Endothelial cell of umbilical vein (primary cell): ENCODE measurements at regions of chr14 and their contacts with region 1.

Region 1: GRCh38 chr14:50778721-50779483 is 52.1 kb downstream of the NIN start:
- DNase-seq: no peak
- H3K4me3 ChIP-seq: no peak overlapping the region
- H3K27ac ChIP-seq: no peak overlapping the region
- H3K4me1 ChIP-seq: peaks cover 32% of the 10 kb centered on the region
- H3K27me3 ChIP-seq: no peaks in the 10 kb centered on the region
- CTCF ChIP-seq: no peak
- POLR2A ChIP-seq: no peak

Region 2: DNA sequence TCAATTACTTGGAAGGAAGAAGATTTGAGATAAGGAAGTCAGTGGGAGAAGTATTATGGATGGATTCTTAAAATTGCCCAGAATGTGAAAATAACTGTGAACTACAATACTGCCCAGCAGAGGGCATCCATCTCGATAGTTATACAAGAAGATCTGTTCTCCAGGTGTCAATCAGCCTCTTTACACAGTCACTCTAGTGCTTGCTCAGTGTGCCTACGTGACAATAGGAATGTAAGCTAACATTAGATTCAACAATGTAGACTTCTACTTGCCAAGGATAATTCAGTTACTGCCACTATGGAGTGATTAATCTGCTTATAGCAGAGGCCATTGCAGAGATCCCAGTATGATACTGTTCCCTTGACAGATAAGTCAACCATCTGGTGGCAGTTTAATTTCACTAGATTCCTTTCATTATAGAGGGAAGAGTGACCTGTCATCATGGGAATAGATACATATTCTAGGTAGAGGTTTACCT is 235.9 kb before region 1 on chr14:
- CTCF ChIA-PET with region 1: interaction called, 14 read pairs
- POLR2A ChIA-PET with region 1: no interaction called
- dilution Hi-C with region 1: no loop called
- intact Hi-C with region 1: loop called (anchors 1 kb)
- DNase-seq: peak; percentile 68
- H3K4me3 ChIP-seq: no peak overlapping the region
- H3K27ac ChIP-seq: no peak overlapping the region
- H3K4me1 ChIP-seq: no peaks in the 10 kb centered on the region
- H3K27me3 ChIP-seq: peaks cover 0 to 11% of the 10 kb centered on the region in 2 experiments
- CTCF ChIP-seq: peak; percentile 24 to 47
- POLR2A ChIP-seq: no peak

Region 3: GRCh38 chr14:50599700-50600444 is 179.0 kb before region 1 on chr14:
- CTCF ChIA-PET with region 1: interaction called, 42 read pairs
- POLR2A ChIA-PET with region 1: no interaction called
- dilution Hi-C with region 1: no loop called
- intact Hi-C with region 1: loop called (anchors 1 kb)
- DNase-seq: peak; percentile 68
- H3K4me3 ChIP-seq: no peak overlapping the region
- H3K27ac ChIP-seq: no peak overlapping the region
- H3K4me1 ChIP-seq: peaks cover 3% of the 10 kb centered on the region
- H3K27me3 ChIP-seq: no peaks in the 10 kb centered on the region
- CTCF ChIP-seq: peak; percentile 35 to 46
- POLR2A ChIP-seq: no peak

Region 4: DNA sequence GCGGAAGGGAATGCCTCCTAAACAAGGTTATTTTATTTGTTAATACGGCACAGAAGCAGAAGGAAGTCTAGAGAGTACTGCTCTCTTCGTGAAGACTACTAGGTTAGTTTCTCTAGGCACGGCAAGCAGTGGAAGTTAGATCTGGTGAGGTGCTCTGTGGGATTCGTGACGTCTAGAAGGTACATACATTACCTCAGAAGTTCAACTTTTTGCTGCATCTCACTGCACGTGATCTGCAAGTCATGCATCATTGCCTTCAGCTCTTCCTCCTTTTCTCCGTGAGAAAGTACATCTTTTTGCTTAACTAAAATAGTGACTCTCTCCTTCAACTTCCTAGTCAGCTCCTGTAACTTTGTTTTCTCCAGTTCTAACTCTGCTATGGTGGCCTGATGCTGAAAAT is 22.6 kb before region 1 on chr14:
- CTCF ChIA-PET with region 1: interaction called, 91 read pairs
- POLR2A ChIA-PET with region 1: no interaction called
- dilution Hi-C with region 1: no loop called
- intact Hi-C with region 1: no loop called
- DNase-seq: no peak
- H3K4me3 ChIP-seq: no peak overlapping the region
- H3K27ac ChIP-seq: no peak overlapping the region
- H3K4me1 ChIP-seq: no peaks in the 10 kb centered on the region
- H3K27me3 ChIP-seq: no peaks in the 10 kb centered on the region
- CTCF ChIP-seq: no peak
- POLR2A ChIP-seq: no peak

Region 5: GRCh38 chr14:51079489-51079888 is 300.6 kb after region 1 on chr14:
- CTCF ChIA-PET with region 1: no interaction called
- POLR2A ChIA-PET with region 1: no interaction called
- dilution Hi-C with region 1: no loop called
- intact Hi-C with region 1: no loop called
- DNase-seq: no peak
- H3K4me3 ChIP-seq: no peak overlapping the region
- H3K27ac ChIP-seq: no peak overlapping the region
- H3K4me1 ChIP-seq: no peaks in the 10 kb centered on the region
- H3K27me3 ChIP-seq: peaks cover 5 to 7% of the 10 kb centered on the region in 2 experiments
- CTCF ChIP-seq: no peak
- POLR2A ChIP-seq: no peak